HCT116 (cell line): ENCODE measurements at regions of chr11 and their contacts with region 1.

Region 1: DNA sequence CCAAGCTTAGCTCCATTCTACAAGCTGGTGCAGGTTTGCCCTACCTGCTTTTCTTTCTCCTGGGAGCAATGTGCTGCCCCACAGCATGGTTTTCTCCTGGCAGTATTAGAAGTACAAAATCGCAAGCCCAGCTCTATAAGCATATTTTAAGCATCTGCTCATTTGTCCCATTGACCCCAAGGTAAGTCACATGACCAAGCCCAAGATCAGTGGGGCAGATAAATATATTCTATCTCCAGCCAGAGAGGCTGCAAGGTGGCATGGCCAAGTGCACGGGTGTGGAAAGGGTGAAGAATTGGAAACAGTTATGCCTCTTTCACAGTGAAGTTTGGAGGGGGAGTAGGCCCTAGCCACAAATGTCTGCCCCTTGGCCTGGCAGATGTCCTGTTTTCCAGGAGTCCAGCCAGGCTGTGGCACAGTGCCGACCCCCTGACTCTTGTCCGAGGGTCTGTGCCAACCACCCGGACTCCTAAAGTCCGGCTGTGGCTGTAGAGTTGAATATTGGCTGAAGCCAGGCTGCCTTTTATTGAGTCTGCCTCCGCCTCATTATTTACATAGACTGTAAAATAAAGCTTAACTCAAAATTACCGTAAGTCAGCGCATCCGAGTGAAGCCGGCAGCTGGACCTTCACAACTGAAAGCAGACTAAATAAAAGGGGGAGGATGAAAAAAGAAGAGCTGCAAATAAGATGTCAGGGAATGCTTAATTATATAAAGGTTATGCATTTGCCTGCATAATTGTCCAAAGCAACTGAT is 165.7 kb downstream of the COMMD9 start:
- DNase-seq: no peak
- ATAC-seq: no peak
- H3K4me3 ChIP-seq: no peak overlapping the region
- H3K27ac ChIP-seq: no peak overlapping the region
- H3K4me1 ChIP-seq: peaks cover 8 to 12% of the 10 kb centered on the region in 2 experiments; a peak in 2 of 4 replicates
- H3K27me3 ChIP-seq: no peaks in the 10 kb centered on the region
- CTCF ChIP-seq: no peak
- POLR2A ChIP-seq: no peak
- RAD21 ChIP-seq: no peak

Region 2: DNA sequence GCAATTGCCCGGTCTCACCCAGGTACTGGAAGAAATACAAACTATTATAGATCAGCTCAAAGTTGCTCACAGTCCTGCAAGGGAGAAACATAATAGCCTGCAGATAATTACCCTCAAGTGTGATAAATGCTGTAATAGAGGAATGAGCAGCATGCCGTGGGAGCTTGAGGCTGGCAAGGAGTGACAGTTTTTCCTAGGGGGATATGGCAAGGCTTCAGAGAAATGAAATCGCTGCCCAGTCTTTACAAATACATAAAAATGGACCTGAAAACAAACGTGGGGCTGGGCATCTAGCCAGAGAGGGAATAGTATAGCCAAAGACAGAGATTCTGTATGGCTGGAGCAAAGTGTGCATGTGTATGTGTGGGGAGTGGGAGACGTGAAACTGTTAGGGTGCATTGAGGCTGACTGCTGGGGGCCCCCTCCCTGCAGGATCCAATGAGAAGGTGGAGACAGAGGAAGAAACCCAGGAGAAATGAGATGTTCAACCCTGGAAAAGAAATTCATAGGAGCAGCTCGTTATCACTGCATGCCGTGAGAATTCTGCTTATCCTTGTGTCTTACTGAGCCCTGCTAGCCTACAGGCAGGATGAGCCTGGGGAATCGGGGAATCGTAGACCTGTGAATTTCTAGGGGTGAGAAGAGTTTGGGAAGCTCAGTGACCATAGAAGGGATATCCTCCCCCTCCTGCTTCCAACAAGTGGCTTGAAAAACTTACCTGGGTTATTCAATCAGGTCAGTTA is 12.7 kb before region 1 on chr11:
- CTCF ChIA-PET with region 1: no interaction called
- POLR2A ChIA-PET with region 1: no interaction called
- RAD21 ChIA-PET with region 1: no interaction called
- intact Hi-C with region 1: loop called (anchors 1 kb)
- DNase-seq: no peak
- ATAC-seq: no peak
- H3K4me3 ChIP-seq: no peak overlapping the region
- H3K27ac ChIP-seq: no peak overlapping the region
- H3K4me1 ChIP-seq: no peaks in the 10 kb centered on the region
- H3K27me3 ChIP-seq: no peaks in the 10 kb centered on the region
- CTCF ChIP-seq: no peak
- POLR2A ChIP-seq: no peak
- RAD21 ChIP-seq: no peak

Region 3: DNA sequence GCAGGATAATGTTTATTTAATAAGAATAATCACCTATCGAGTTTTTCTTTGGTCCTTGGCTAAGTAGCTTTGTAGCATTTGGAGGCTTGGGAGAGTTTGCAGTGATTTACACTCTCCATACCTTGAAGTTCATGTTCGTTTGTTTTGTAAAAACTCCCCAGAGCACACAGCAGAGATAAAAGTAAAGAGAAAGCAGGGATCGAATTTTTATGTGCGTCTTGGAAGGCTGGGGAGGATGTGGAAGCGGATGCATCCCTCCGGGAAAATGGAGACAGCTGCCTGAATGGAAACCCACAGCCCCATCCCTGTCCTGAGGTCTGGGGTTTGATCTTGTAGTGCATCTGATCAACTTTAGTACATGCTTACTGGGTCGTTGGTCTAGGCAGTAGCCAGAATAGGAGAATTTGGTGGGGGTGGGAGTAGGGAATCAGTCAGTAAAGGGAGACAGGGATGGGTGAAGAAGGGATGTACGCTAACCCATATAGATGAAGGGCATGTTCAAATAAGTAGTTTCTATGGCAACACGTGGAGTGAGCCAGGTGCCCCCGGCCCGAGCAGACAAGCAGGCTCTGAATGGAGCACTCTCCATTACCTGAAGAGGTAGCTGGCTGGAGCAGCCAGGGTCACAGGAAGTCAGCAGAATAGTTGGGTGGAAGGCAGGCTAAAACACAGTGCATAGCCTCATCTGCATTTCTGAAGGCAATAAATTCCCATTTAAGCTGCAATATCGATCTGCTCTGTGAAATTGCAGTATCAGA is 17.9 kb after region 1 on chr11:
- CTCF ChIA-PET with region 1: no interaction called
- POLR2A ChIA-PET with region 1: no interaction called
- RAD21 ChIA-PET with region 1: no interaction called
- intact Hi-C with region 1: no loop called
- DNase-seq: no peak
- ATAC-seq: no peak
- H3K4me3 ChIP-seq: no peak overlapping the region
- H3K27ac ChIP-seq: no peak overlapping the region
- H3K4me1 ChIP-seq: peaks cover 0 to 1% of the 10 kb centered on the region in 2 experiments; a peak in 1 of 4 replicates
- H3K27me3 ChIP-seq: no peaks in the 10 kb centered on the region
- CTCF ChIP-seq: no peak
- POLR2A ChIP-seq: no peak
- RAD21 ChIP-seq: no peak